Activated naive CD4-positive, alpha-beta T cell treated with anti-CD3 and anti-CD28 coated beads for 36 hours (primary cell): ENCODE measurements at regions of chr1 and their contacts with region 1.

Region 1: GRCh38 chr1:9004700-9005394 is 21.4 kb downstream of the SLC2A7 start:
- DNase-seq: peak; percentile 94
- H3K4me3 Mint-ChIP-seq: peak overlapping the region; percentile 24
- H3K27ac Mint-ChIP-seq: no peak overlapping the region
- H3K4me1 Mint-ChIP-seq: peaks cover 8% of the 10 kb centered on the region
- H3K27me3 Mint-ChIP-seq: no peaks in the 10 kb centered on the region

Region 2: DNA sequence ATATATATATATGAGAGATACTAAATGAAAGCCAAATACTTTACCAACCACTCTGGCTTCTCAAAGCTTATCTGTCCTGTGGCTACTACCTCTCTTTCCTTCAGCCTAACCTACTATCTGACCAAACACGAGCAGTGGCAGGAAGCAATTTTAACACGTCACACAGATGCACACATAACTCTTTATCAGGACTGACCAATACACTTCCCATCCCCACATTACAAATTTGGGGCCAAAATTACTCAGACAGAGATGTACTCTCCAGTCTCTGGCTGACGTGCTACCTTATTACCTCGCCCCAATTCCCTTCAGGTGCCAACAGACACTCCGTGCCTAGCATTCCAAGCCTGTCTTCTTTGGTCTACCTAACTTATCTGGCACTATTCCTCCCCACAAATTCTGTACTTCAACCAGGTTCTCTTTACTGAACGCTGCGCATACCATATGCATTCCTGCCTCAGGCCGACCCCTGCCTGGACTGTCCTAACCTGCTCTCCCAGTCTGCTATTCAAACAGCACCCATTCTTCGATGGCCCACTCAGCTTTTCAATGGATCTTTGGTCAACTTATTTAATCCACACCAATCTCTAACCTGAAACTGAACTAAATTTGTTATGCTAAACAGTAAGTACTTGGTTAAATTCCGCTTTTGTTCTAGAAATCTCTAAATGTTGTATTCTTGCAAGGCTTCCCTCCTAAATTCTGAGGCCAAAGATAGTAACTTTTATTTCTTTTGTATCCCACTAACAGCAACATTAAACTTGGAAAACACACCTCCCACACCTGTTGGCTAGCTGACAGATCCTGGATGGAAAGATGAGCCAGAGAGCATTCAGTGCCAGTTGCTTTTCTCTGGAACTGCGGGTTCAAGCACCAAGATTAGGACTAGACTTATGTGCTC is 215.3 kb before region 1 on chr1:
- CTCF ChIA-PET with region 1: no interaction called
- intact Hi-C with region 1: loop called (anchors 10 kb)
- DNase-seq: no peak
- H3K4me3 Mint-ChIP-seq: no peak overlapping the region
- H3K27ac Mint-ChIP-seq: no peak overlapping the region
- H3K4me1 Mint-ChIP-seq: no peaks in the 10 kb centered on the region
- H3K27me3 Mint-ChIP-seq: no peaks in the 10 kb centered on the region

Region 3: DNA sequence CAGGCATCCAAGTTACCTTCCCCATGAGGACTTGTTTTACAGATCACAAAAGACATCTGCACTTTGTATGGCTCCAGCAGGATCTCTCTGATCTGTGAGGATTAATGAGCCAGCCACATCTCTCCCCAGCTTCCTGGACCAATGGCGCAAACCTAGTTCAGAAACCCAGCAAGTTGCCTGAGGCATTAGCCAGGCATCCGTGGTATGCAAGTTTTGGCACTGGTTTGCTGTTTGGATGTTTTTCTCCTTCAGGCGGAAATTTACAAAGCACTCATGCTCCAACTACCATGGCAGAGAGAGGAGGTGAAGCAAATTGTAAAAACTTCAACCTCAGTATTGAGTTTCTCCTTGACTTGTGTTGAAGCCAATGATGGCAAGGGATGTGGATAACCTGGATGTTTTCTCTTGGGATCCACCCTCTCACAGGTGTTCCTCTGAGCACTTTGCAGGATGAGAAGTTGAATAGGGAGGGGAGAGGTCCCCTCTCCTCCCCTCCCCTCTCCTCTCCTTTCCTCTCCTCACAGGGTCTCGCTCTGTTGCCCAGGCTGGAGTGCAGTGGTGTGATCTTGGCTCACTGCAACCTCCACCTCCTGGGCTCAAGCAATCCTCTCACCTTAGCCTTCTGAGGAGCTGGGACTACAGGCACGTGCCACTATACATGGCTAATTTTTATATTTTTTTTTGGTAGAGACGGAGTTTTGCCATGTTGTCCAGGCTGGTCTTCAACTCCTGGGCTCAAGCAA is 100.8 kb before region 1 on chr1:
- CTCF ChIA-PET with region 1: interaction called, 11 read pairs
- intact Hi-C with region 1: no loop called
- DNase-seq: no peak
- H3K4me3 Mint-ChIP-seq: no peak overlapping the region
- H3K27ac Mint-ChIP-seq: no peak overlapping the region
- H3K4me1 Mint-ChIP-seq: peaks cover 48% of the 10 kb centered on the region
- H3K27me3 Mint-ChIP-seq: no peaks in the 10 kb centered on the region

Region 4: GRCh38 chr1:8941906-8942305 is 62.9 kb before region 1 on chr1:
- CTCF ChIA-PET with region 1: interaction called, 16 read pairs
- intact Hi-C with region 1: no loop called
- DNase-seq: no peak
- H3K4me3 Mint-ChIP-seq: no peak overlapping the region
- H3K27ac Mint-ChIP-seq: no peak overlapping the region
- H3K4me1 Mint-ChIP-seq: peaks cover 85% of the 10 kb centered on the region
- H3K27me3 Mint-ChIP-seq: no peaks in the 10 kb centered on the region

Region 5: GRCh38 chr1:8992936-8993687 is 11.7 kb before region 1 on chr1:
- CTCF ChIA-PET with region 1: interaction called, 67 read pairs
- intact Hi-C with region 1: no loop called
- DNase-seq: peak; percentile 39
- H3K4me3 Mint-ChIP-seq: no peak overlapping the region
- H3K27ac Mint-ChIP-seq: no peak overlapping the region
- H3K4me1 Mint-ChIP-seq: peaks cover 8% of the 10 kb centered on the region
- H3K27me3 Mint-ChIP-seq: no peaks in the 10 kb centered on the region

Region 6: GRCh38 chr1:9066945-9067807 is 62.3 kb after region 1 on chr1:
- CTCF ChIA-PET with region 1: no interaction called
- intact Hi-C with region 1: no loop called
- DNase-seq: no peak
- H3K4me3 Mint-ChIP-seq: no peak overlapping the region
- H3K27ac Mint-ChIP-seq: no peak overlapping the region
- H3K4me1 Mint-ChIP-seq: peaks cover 4% of the 10 kb centered on the region
- H3K27me3 Mint-ChIP-seq: no peaks in the 10 kb centered on the region